ENCODE measurements at regions of chr11 and their contacts with region 1.

Region 1: GRCh38 chr11:66958232-66958955 is at the start of gene PC:
- DNase-seq: peak; percentile 83 to 98 (median 96)
- ATAC-seq: peak; percentile 98
- H3K4me3 ChIP-seq: peak within 1 kb of the TSS; percentile 81
- H3K4me3 Mint-ChIP-seq: peak within 1 kb of the TSS; percentile 82 to 95 (median 91)
- H3K27ac ChIP-seq: peak within 1 kb of the TSS; percentile 64
- H3K27ac Mint-ChIP-seq: peak within 1 kb of the TSS; percentile 76 to 93 (median 87)
- H3K4me1 ChIP-seq: peaks cover 8 to 19% of the 10 kb centered on the region in 2 donors
- H3K4me1 Mint-ChIP-seq: peaks cover 16 to 31% (median 27%) of the 10 kb centered on the region in 7 donors
- H3K27me3 ChIP-seq: no peaks in the 10 kb centered on the region
- H3K27me3 Mint-ChIP-seq: peaks cover 0 to 6% (median 0%) of the 10 kb centered on the region in 5 donors
- total RNA-seq, gene PC: 8.4 to 11.2 (median 10.0) TPM

Region 2: DNA sequence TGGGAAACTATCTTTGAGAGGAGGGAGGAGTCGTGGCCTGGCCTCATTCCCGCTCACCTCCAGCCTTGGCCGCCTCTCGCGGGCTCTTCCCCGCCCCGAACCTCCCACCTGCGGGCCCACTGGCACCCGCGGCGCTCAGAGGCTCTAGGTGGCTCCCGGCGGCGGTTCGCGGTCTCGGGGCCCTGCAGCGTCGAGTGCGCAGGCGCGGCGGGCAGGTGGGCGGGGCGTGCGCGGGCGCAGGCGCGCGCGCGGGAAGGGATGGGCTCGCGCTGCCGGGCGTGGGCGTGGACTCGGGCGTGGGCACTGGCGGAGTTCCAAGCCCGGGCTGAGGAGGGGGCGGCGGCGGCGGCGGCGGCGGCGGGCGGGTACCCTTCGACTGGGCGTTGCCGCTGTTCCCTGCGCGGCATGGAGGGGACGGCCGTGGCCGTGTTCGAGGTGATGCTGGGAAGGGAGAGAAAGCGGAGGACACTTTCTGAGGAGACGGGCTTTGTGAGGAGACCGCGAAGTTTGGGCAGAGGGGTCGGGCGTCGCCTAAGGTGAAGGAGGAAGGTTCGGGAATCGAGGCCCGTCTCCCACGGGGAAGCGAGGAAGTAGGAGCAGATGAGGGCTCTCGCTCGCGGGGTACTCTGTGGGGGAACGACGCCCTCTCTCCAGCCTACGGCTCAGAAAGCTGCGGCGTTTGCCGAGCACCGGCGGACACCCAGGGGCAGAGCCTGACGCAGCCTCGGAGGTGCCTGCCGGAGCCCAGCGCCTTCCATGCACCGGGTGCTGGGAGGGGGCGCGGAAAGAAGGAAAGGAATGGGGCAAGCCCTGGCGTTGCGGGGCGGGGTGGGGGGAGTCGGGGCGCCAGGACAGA is 213.7 kb before region 1 on chr11:
- CTCF ChIA-PET with region 1: no interaction called
- POLR2A ChIA-PET with region 1: no interaction called
- intact Hi-C with region 1: loop called in 1 of 2 experiments (anchors 1 kb)
- DNase-seq: peak; percentile 83 to 98 (median 91)
- ATAC-seq: peak; percentile 97
- H3K4me3 ChIP-seq: peak overlapping the region; percentile 83
- H3K4me3 Mint-ChIP-seq: peak overlapping the region; percentile 82 to 97 (median 94)
- H3K27ac ChIP-seq: peak overlapping the region; percentile 89
- H3K27ac Mint-ChIP-seq: peak overlapping the region; percentile 18 to 89 (median 81)
- H3K4me1 ChIP-seq: peaks cover 0 to 3% of the 10 kb centered on the region in 2 donors
- H3K4me1 Mint-ChIP-seq: peaks cover 0 to 16% (median 4%) of the 10 kb centered on the region in 7 donors
- H3K27me3 ChIP-seq: no peaks in the 10 kb centered on the region
- H3K27me3 Mint-ChIP-seq: peaks cover 0 to 10% (median 0%) of the 10 kb centered on the region in 5 donors

Region 3: DNA sequence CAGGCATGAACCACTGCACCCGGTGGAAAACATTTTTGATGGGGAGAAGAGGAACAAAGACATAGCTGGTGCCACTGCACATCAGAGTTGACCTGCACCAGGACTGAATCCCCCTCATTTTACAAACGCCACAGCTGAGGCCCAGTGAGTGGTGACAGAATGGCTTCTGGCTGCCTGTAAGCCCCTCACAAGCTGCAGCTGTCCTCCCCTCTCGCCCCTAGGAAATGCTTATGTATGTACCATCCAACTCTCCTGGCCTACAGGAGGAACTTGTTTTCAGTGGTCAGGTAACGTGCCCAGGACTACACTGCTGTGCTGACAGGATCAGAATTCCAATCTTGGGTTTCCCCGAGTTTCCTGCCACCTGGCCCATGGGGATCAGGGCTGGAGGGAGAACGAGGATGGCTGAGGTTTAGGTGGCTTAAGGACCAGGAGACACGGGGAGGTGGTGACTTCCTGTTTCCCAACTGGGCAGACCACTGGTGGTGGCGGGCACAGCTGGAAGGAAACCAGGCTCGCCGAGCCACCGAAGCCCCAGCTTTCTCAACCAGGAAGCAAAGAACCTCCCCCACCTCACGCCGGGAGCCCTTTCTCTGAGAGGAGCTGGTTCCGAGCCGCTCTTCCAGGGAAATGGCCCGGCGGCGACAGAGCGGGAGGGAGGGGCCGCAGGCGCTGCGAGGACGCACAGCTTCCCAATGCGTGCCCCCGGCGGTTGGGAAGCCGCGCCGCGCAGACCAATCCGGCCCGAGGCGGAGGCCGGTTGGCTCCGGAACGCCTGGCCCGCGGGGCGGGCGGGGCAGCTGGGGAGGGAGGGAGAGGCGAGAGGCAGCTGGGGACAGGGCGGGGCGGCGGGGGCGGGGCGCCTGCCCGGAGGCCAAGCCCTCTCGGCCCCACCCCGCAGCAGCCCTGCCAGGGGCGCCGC is 102.6 kb before region 1 on chr11:
- CTCF ChIA-PET with region 1: no interaction called
- POLR2A ChIA-PET with region 1: interaction called, 3 read pairs
- intact Hi-C with region 1: loop called in 1 of 2 experiments (anchors 1 kb)
- DNase-seq: peak in 3 of 9 donors; percentile 17 to 91 (median 55)
- ATAC-seq: peak; percentile 85
- H3K4me3 ChIP-seq: peak overlapping the region; percentile 71
- H3K4me3 Mint-ChIP-seq: peak overlapping the region; percentile 71 to 89 (median 85)
- H3K27ac ChIP-seq: peak overlapping the region; percentile 14
- H3K27ac Mint-ChIP-seq: peak overlapping the region in 6 of 9 donors; percentile 28 to 90 (median 54)
- H3K4me1 ChIP-seq: peaks cover 0 to 6% of the 10 kb centered on the region in 2 donors
- H3K4me1 Mint-ChIP-seq: peaks cover 0 to 26% (median 9%) of the 10 kb centered on the region in 7 donors
- H3K27me3 ChIP-seq: no peaks in the 10 kb centered on the region
- H3K27me3 Mint-ChIP-seq: no peaks in the 10 kb centered on the region

Region 4: DNA sequence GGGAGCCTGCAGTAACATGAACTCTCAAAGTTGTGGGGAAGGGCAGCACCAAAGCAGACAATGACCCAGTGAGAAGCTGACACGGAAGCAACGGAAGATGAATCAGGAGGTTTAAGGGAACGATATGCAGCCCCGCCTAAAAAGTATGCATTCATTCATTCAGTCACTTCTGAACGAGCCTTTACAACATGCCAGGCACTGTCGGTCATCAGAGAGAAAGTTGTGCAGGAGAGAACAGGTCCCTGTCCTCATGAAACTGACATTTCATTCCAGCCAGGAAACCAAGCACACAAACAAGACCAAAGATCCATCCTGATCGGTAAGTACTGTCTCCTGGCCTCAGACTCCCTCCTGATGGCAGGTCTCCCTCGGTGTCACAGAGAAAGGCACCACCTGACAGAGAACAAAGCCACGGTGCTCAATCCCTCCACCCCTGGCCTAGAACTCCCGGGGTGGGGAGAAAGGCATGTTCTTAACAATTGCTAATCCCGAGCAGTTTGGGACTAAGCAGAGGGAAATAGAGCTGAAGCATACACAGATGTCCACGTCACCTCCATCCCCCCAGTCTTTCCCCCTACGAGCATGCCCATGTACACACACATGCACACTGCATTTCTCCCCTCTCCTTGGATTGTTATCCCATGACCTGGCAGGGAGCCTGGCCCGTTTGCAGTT is 52.2 kb before region 1 on chr11:
- CTCF ChIA-PET with region 1: no interaction called
- POLR2A ChIA-PET with region 1: no interaction called
- intact Hi-C with region 1: no loop called
- DNase-seq: no peak
- ATAC-seq: no peak
- H3K4me3 ChIP-seq: no peak overlapping the region
- H3K4me3 Mint-ChIP-seq: no peak overlapping the region
- H3K27ac ChIP-seq: no peak overlapping the region
- H3K27ac Mint-ChIP-seq: no peak overlapping the region
- H3K4me1 ChIP-seq: no peaks in the 10 kb centered on the region
- H3K4me1 Mint-ChIP-seq: no peaks in the 10 kb centered on the region
- H3K27me3 ChIP-seq: no peaks in the 10 kb centered on the region
- H3K27me3 Mint-ChIP-seq: peaks cover 0 to 3% (median 0%) of the 10 kb centered on the region in 5 donors

Region 5: GRCh38 chr11:67022328-67022927 is 64.0 kb after region 1 on chr11:
- CTCF ChIA-PET with region 1: no interaction called
- POLR2A ChIA-PET with region 1: no interaction called
- intact Hi-C with region 1: loop called in 1 of 2 experiments (anchors 1 kb)
- DNase-seq: no peak
- ATAC-seq: no peak
- H3K4me3 ChIP-seq: no peak overlapping the region
- H3K4me3 Mint-ChIP-seq: peak overlapping the region in 9 of 10 donors; percentile 23 to 91 (median 68)
- H3K27ac ChIP-seq: no peak overlapping the region
- H3K27ac Mint-ChIP-seq: no peak overlapping the region
- H3K4me1 ChIP-seq: peaks cover 24 to 31% of the 10 kb centered on the region in 2 donors
- H3K4me1 Mint-ChIP-seq: peaks cover 4 to 32% (median 24%) of the 10 kb centered on the region in 7 donors
- H3K27me3 ChIP-seq: peaks cover 9 to 18% of the 10 kb centered on the region in 2 donors
- H3K27me3 Mint-ChIP-seq: peaks cover 16 to 65% (median 35%) of the 10 kb centered on the region in 5 donors

Measured in naive thymus-derived CD4-positive, alpha-beta T cell (primary cell).